CD4-positive, alpha-beta T cell (primary cell): ENCODE measurements at regions of chr5 and their contacts with region 1.

Region 1: GRCh38 chr5:172188033-172188892 is at the start of gene STK10:
- DNase-seq: peak; percentile 79 to 95 (median 86)
- ATAC-seq: peak; percentile 74
- H3K4me3 ChIP-seq: peak within 1 kb of the TSS; percentile 99
- H3K4me3 Mint-ChIP-seq: peak within 1 kb of the TSS; percentile 100
- H3K27ac ChIP-seq: peak within 1 kb of the TSS; percentile 89 to 98
- H3K27ac Mint-ChIP-seq: peak within 1 kb of the TSS; percentile 98
- H3K4me1 ChIP-seq: peaks cover 37% of the 10 kb centered on the region
- H3K4me1 Mint-ChIP-seq: peaks cover 37% of the 10 kb centered on the region
- H3K27me3 ChIP-seq: no peaks in the 10 kb centered on the region
- H3K27me3 Mint-ChIP-seq: no peaks in the 10 kb centered on the region
- CTCF ChIP-seq: peak; percentile 92
- total RNA-seq, gene STK10: 211 to 229 TPM

Region 2: GRCh38 chr5:172059661-172060100 is 128.6 kb before region 1 on chr5:
- CTCF ChIA-PET with region 1: interaction called, 11 read pairs
- POLR2A ChIA-PET with region 1: interaction called, 6 read pairs
- intact Hi-C with region 1: no loop called
- DNase-seq: peak in 3 of 14 experiments; percentile 23 to 48 (median 45)
- ATAC-seq: no peak
- H3K4me3 ChIP-seq: no peak overlapping the region
- H3K4me3 Mint-ChIP-seq: no peak overlapping the region
- H3K27ac ChIP-seq: peak overlapping the region in 1 of 2 donors; percentile 22
- H3K27ac Mint-ChIP-seq: peak overlapping the region; percentile 31
- H3K4me1 ChIP-seq: peaks cover 7% of the 10 kb centered on the region
- H3K4me1 Mint-ChIP-seq: peaks cover 59% of the 10 kb centered on the region
- H3K27me3 ChIP-seq: no peaks in the 10 kb centered on the region
- H3K27me3 Mint-ChIP-seq: no peaks in the 10 kb centered on the region
- CTCF ChIP-seq: peak; percentile 53

Region 3: DNA sequence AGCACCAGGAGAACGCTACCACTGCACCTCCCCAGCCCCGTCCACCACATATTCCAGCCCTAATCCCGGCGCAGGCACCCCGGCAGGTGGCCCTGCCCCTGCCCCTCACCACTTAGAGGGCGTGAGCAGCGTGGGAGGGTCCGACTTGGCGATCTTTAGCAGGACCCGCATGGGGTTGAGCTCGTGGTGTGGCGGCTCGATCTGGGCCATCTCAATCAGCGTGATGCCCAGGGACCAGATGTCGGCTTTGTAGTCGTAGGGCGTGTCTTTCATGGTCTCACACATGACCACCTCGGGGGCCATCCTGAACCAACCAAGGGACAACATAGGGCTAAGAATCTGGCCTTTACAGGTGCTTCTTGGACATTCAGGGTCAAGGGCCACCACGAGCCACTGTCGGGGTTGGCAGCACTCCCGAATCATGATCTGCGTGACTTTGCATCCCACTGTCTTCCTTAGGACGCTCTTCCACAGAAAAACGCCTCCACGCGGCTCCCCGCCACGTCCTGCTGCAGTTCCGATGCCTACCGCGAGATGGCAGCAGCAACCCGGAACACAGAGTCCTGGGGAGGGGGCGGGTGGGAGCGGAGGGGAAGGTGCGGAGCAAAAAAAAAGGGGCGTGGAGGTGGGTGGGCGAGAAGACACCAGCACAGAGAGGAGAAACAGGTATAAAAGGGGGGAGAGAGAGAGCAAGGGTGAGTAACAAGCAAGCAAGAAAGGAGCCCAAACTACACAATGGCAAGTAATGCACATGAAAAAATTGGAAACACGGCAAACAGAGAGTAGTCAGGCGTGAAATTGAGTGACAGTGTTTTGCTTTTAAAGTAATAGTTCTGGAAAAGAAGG is 81.5 kb before region 1 on chr5:
- CTCF ChIA-PET with region 1: interaction called, 49 read pairs
- POLR2A ChIA-PET with region 1: interaction called, 54 read pairs
- intact Hi-C with region 1: loop called (anchors 1 kb)
- DNase-seq: peak; percentile 52 to 82 (median 66)
- ATAC-seq: peak; percentile 22
- H3K4me3 ChIP-seq: no peak overlapping the region
- H3K4me3 Mint-ChIP-seq: peak overlapping the region; percentile 42
- H3K27ac ChIP-seq: peak overlapping the region in 1 of 2 donors; percentile 5
- H3K27ac Mint-ChIP-seq: peak overlapping the region; percentile 81
- H3K4me1 ChIP-seq: peaks cover 49% of the 10 kb centered on the region
- H3K4me1 Mint-ChIP-seq: peaks cover 46% of the 10 kb centered on the region
- H3K27me3 ChIP-seq: no peaks in the 10 kb centered on the region
- H3K27me3 Mint-ChIP-seq: no peaks in the 10 kb centered on the region
- CTCF ChIP-seq: peak; percentile 98

Region 4: DNA sequence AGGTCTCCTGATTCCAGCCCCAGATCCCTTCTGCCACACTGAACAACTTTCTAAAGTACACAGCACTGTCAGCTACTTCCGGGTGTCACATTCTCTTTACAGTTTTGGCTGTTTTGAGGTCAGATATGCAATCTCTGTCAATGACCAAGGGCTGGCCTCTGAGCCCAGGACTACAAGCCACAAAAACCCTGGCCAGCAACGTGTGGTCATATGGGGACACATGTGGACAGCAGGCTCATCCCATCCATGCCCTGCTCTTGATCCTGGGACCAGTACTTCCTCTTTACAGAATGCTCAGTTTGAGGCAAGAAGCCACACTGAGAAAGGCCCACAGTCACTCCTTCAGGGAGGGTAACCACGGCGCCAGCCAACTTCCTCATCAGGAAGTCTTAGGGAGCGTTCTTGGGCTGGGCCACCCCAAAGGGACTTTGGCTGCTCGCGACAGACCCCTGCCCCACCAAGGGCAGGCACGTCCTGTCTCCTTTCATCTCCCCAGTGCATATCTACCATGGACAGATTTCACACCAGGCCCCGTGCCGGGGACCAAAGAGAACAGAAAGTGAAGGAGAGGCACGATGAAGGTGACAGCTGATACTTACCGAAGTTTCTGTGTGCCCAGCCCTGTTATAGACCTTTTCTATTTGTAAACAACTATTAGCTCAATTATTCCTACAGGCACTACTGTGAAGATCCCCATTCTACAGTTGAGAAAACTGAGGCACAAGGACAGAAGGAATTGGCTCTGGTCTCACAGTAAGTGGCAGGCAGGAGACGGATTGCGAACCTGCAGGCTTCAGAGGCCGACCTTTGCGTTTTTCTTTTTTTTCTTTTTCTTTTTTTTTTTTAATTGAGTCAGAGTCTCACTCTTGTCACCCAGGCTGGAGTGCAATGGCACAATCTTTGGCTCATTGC is 37.5 kb before region 1 on chr5:
- CTCF ChIA-PET with region 1: interaction called, 14 read pairs
- POLR2A ChIA-PET with region 1: interaction called, 6 read pairs
- intact Hi-C with region 1: loop called (anchors 2 to 5 kb)
- DNase-seq: peak in 5 of 14 experiments; percentile 14 to 69 (median 48)
- ATAC-seq: peak; percentile 62
- H3K4me3 ChIP-seq: peak overlapping the region; percentile 23
- H3K4me3 Mint-ChIP-seq: peak overlapping the region; percentile 25
- H3K27ac ChIP-seq: peak overlapping the region; percentile 73 to 76
- H3K27ac Mint-ChIP-seq: peak overlapping the region; percentile 93
- H3K4me1 ChIP-seq: peaks cover 87% of the 10 kb centered on the region
- H3K4me1 Mint-ChIP-seq: peaks cover 85% of the 10 kb centered on the region
- H3K27me3 ChIP-seq: no peaks in the 10 kb centered on the region
- H3K27me3 Mint-ChIP-seq: no peaks in the 10 kb centered on the region
- CTCF ChIP-seq: no peak

Region 5: DNA sequence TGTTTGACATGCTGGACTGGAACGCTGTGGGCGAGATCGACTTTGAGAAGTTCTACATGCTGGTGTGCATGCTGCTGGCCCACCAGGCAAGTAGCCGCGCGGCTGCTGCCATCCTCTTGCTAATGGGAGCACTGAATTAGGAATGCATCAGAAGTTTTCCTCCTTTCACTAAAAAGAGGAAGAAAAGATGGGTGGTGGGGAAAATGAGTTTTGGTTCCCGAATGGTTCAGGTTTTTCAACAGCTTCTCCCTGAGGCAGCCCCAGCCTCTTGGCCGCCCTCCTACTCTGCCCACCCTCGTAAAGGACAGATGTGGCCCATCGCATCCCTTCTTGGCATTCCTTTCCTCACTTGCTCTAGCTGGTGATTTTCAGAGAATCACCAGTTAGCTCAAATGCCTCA is 11.2 kb after region 1 on chr5:
- CTCF ChIA-PET with region 1: no interaction called
- POLR2A ChIA-PET with region 1: no interaction called
- intact Hi-C with region 1: no loop called
- DNase-seq: no peak
- ATAC-seq: no peak
- H3K4me3 ChIP-seq: no peak overlapping the region
- H3K4me3 Mint-ChIP-seq: no peak overlapping the region
- H3K27ac ChIP-seq: no peak overlapping the region
- H3K27ac Mint-ChIP-seq: no peak overlapping the region
- H3K4me1 ChIP-seq: no peaks in the 10 kb centered on the region
- H3K4me1 Mint-ChIP-seq: no peaks in the 10 kb centered on the region
- H3K27me3 ChIP-seq: peaks cover 0 to 2% of the 10 kb centered on the region in 2 experiments
- H3K27me3 Mint-ChIP-seq: no peaks in the 10 kb centered on the region
- CTCF ChIP-seq: no peak

Region 6: GRCh38 chr5:172283020-172283861 is 95.0 kb after region 1 on chr5 and contains the start of gene UBTD2:
- CTCF ChIA-PET with region 1: interaction called, 3 read pairs
- POLR2A ChIA-PET with region 1: no interaction called
- intact Hi-C with region 1: loop called in 1 of 2 experiments (anchors 2 kb)
- DNase-seq: peak in 13 of 14 experiments; percentile 37 to 86 (median 70)
- ATAC-seq: peak; percentile 69
- H3K4me3 ChIP-seq: peak within 1 kb of the TSS; percentile 81
- H3K4me3 Mint-ChIP-seq: peak within 1 kb of the TSS; percentile 95
- H3K27ac ChIP-seq: no peak within 1 kb of the TSS
- H3K27ac Mint-ChIP-seq: peak within 1 kb of the TSS; percentile 68
- H3K4me1 ChIP-seq: peaks cover 14% of the 10 kb centered on the region
- H3K4me1 Mint-ChIP-seq: peaks cover 33% of the 10 kb centered on the region
- H3K27me3 ChIP-seq: no peaks in the 10 kb centered on the region
- H3K27me3 Mint-ChIP-seq: no peaks in the 10 kb centered on the region
- CTCF ChIP-seq: peak; percentile 68
- total RNA-seq, gene UBTD2: 0.66 to 1.1 TPM

Region 7: DNA sequence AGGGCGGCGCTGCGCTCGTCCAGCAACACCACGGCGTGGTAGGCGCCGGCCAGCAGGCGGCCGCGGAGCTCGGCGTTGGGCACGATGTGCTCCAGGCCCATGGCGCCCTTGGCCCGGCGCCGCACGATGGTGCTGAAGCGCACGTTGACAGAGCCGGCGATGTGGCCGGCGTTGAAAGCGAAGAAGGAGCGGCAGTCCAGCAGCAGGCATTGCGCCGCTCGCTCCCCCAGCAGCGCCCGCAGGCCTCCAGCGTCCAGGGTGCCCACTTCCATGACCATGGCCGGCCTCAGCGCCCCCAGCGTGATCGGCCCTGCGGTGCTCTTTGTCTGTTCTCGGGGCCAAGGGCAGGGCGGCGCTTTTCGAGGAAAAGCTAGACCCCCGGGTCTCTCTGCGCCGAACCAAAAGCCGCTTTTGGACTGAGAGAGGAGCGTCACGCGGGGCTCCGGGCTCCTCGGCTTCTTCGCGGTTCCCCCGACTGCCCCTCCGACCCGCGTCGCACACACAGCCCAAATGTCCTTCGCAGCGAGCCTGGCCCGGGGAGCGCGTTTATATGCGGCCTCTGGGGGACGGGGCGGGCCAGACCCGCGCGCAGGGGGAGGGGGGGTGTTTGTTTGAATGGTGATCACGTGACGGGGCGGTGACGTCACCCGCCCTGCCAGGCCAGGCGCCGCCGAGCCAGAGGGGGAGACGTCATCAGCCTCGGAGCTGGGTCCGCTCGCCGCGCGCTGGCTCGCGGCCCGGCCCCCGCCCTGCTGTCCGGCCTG is 582.6 kb after region 1 on chr5 and contains the start of gene DUSP1:
- CTCF ChIA-PET with region 1: no interaction called
- POLR2A ChIA-PET with region 1: interaction called, 4 read pairs
- intact Hi-C with region 1: loop called in 1 of 2 experiments (anchors 10 kb)
- DNase-seq: peak; percentile 96 to 100 (median 98)
- ATAC-seq: peak; percentile 45
- H3K4me3 ChIP-seq: peak within 1 kb of the TSS; percentile 95
- H3K4me3 Mint-ChIP-seq: peak within 1 kb of the TSS; percentile 99
- H3K27ac ChIP-seq: peak within 1 kb of the TSS; percentile 100
- H3K27ac Mint-ChIP-seq: peak within 1 kb of the TSS; percentile 95
- H3K4me1 ChIP-seq: peaks cover 87% of the 10 kb centered on the region
- H3K4me1 Mint-ChIP-seq: peaks cover 78% of the 10 kb centered on the region
- H3K27me3 ChIP-seq: no peaks in the 10 kb centered on the region
- H3K27me3 Mint-ChIP-seq: peaks cover 6% of the 10 kb centered on the region
- CTCF ChIP-seq: peak; percentile 33
- total RNA-seq, gene DUSP1: 761 to 768 TPM